ENCODE measurements at regions of chr17 and their contacts with region 1.

Region 1: DNA sequence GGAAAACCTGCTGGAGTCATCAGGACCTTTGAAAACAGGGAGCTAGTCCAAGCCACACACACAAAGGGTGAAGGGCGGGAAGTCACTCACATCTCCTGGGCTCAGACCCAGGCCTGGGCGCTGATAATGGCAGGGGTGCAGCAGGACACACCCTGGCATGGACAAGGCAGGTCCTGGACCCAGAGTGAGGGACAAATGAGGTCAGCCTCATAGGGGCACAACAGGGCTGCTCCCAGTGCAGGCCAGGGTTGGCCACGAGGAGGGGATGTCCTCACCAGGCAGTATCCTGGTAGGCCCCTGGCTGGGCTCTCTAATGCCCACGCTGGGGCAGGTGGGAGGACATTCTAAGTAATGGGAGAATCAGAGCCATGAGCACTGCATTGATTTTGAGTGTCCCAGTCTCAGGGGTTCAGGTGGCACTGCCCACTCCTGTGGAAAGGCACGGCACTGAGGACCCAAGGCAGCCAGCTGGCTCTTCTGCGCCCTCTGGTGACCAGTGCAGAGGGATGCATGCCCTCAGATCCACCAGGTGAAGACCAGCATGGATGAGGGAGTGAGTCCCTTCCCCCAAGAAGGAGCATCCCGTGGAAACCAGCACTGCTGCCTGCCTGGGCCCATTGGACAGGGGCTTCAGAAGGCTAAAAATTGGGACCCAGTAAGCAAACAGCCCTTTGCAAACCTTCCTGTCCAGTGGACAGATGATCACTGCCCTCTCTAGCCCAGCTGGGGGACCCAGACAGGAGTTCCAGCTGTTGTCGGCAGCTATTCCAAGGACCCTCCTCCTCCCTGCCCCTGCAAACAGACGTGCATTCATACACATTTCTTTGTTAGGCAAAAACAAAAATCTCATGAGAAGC is 23.4 kb upstream of the SREBF1 start:
- DNase-seq: peak; percentile 82
- ATAC-seq: peak; percentile 97
- H3K4me3 ChIP-seq: no peak overlapping the region
- H3K4me3 Mint-ChIP-seq: no peak overlapping the region
- H3K27ac ChIP-seq: no peak overlapping the region
- H3K27ac Mint-ChIP-seq: no peak overlapping the region
- H3K4me1 ChIP-seq: peaks cover 0 to 6% of the 10 kb centered on the region in 2 donors
- H3K4me1 Mint-ChIP-seq: no peaks in the 10 kb centered on the region
- H3K27me3 ChIP-seq: no peaks in the 10 kb centered on the region
- H3K27me3 Mint-ChIP-seq: no peaks in the 10 kb centered on the region
- CTCF ChIP-seq: peak; percentile 96

Region 2: DNA sequence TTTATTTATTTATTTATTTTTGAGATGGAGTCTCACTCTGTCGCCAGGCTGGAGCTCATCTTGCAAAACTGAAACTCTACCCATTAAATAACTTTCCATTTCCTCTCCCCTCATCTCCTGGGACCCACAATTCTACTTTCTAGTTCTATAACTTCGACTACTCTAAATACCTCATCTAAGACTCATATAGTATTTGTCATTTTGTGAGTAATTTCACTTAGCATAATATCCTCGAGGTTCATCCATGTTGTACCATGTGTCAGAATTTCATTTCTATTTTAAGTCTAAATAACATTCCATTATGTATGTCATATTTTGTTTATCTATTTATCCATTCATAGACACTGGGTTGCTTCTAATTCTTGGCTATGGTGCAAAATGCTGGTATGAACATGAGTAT is 562.0 kb before region 1 on chr17:
- CTCF ChIA-PET with region 1: no interaction called
- POLR2A ChIA-PET with region 1: no interaction called
- intact Hi-C with region 1: no loop called
- DNase-seq: no peak
- ATAC-seq: no peak
- H3K4me3 ChIP-seq: no peak overlapping the region
- H3K4me3 Mint-ChIP-seq: no peak overlapping the region
- H3K27ac ChIP-seq: no peak overlapping the region
- H3K27ac Mint-ChIP-seq: no peak overlapping the region
- H3K4me1 ChIP-seq: peaks cover 14 to 17% of the 10 kb centered on the region in 2 donors
- H3K4me1 Mint-ChIP-seq: peaks cover 20% of the 10 kb centered on the region
- H3K27me3 ChIP-seq: peaks cover 0 to 6% (median under 1%) of the 10 kb centered on the region in 4 experiments
- H3K27me3 Mint-ChIP-seq: no peaks in the 10 kb centered on the region
- CTCF ChIP-seq: no peak

Region 3: DNA sequence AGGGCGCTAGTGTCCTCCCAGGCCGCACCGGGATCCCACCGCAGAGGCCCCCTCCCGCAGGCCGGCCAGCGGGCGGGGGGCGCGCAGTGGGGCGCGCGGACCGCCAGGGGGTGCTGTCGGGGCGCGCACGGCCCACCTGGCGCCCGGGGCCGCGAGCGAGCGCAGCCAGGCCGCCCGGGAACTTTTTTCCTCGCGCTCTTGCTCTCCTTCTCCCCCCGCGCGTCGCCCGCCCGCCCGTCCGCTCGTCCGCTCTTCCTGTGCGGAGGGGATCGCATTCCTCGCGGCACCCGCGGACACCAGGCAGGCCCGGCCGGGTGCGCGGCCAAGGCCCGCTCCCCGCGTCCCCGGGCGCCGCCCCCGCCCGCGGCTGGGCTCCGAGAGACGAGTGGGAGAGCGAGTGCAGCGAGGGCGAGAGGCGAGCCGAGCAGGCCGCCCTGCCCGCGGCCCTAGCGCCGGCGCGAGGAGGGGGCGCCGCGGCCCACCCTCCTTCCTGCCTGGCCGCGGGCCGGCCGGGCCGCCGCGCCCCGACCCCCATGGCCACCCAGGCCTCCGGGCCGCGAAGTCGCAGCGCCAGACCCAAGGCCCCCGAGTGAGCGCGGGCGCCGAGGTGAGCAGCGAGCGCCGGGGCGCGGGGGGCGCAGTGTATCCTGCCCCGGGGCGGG is 178.8 kb before region 1 on chr17 and contains the start of gene RAI1:
- CTCF ChIA-PET with region 1: interaction called, 90 read pairs
- POLR2A ChIA-PET with region 1: interaction called, 5 read pairs
- intact Hi-C with region 1: loop called (anchors 1 kb)
- DNase-seq: peak; percentile 90
- ATAC-seq: peak; percentile 64
- H3K4me3 ChIP-seq: peak within 1 kb of the TSS in 4 of 5 experiments; percentile 66 to 86 (median 72)
- H3K4me3 Mint-ChIP-seq: peak within 1 kb of the TSS; percentile 91
- H3K27ac ChIP-seq: peak within 1 kb of the TSS; percentile 86 to 97
- H3K27ac Mint-ChIP-seq: peak within 1 kb of the TSS; percentile 88
- H3K4me1 ChIP-seq: peaks cover 7 to 19% of the 10 kb centered on the region in 2 donors
- H3K4me1 Mint-ChIP-seq: peaks cover 30% of the 10 kb centered on the region
- H3K27me3 ChIP-seq: peaks cover 0 to 3% (median 0%) of the 10 kb centered on the region in 4 experiments
- H3K27me3 Mint-ChIP-seq: peaks cover 5% of the 10 kb centered on the region
- CTCF ChIP-seq: peak; percentile 74
- total RNA-seq, gene RAI1: 33.6 and 34.0 TPM in 2 replicates

Region 4: GRCh38 chr17:17729620-17730249 is 130.4 kb before region 1 on chr17:
- CTCF ChIA-PET with region 1: interaction called, 3 read pairs
- POLR2A ChIA-PET with region 1: no interaction called
- intact Hi-C with region 1: loop called (anchors 1 kb)
- DNase-seq: peak; percentile 76
- ATAC-seq: peak; percentile 90
- H3K4me3 ChIP-seq: no peak overlapping the region
- H3K4me3 Mint-ChIP-seq: no peak overlapping the region
- H3K27ac ChIP-seq: no peak overlapping the region
- H3K27ac Mint-ChIP-seq: peak overlapping the region; percentile 12
- H3K4me1 ChIP-seq: peaks cover 9 to 20% of the 10 kb centered on the region in 2 donors
- H3K4me1 Mint-ChIP-seq: peaks cover 23% of the 10 kb centered on the region
- H3K27me3 ChIP-seq: no peaks in the 10 kb centered on the region
- H3K27me3 Mint-ChIP-seq: no peaks in the 10 kb centered on the region
- CTCF ChIP-seq: peak; percentile 81

Region 5: DNA sequence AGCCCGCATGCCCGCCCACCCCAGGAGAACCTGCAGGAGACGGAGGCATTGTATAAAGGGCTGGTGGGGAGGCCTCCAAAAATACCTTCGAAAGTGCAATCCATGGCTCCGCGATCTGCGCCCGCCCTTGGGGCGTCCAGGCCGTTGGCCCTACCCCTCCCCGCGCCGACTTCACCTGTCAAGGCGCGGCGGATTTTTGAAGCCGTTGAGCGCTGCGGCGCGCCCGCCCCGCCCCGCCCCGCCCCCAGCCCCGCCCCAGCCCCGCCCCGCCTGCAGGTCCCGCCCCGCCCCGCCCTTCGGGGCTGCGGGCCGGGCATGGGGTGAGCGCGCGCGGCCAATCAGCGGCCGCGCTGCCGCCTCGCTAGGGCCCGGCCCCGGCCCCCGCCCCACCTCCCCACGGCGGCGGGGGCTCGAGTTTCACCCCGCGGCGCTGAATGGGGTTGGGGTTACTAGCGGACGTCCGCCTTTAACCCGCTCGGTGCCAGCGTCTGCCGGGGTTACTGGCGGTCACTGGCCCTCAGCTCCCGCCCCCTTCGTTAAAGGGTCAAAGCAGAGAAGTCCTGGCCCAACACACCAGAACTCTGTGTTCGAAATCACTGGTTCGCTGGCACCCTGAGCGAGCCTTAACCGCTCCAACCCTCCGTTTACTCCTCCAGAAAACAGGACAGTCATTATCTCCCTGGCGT is 36.6 kb before region 1 on chr17:
- CTCF ChIA-PET with region 1: interaction called, 26 read pairs
- POLR2A ChIA-PET with region 1: no interaction called
- intact Hi-C with region 1: no loop called
- DNase-seq: peak; percentile 86
- ATAC-seq: peak; percentile 93
- H3K4me3 ChIP-seq: peak overlapping the region; percentile 35 to 82 (median 56)
- H3K4me3 Mint-ChIP-seq: peak overlapping the region; percentile 86
- H3K27ac ChIP-seq: peak overlapping the region; percentile 16 to 56
- H3K27ac Mint-ChIP-seq: peak overlapping the region; percentile 67
- H3K4me1 ChIP-seq: peaks cover 28 to 41% of the 10 kb centered on the region in 2 donors
- H3K4me1 Mint-ChIP-seq: peaks cover 52% of the 10 kb centered on the region
- H3K27me3 ChIP-seq: no peaks in the 10 kb centered on the region
- H3K27me3 Mint-ChIP-seq: no peaks in the 10 kb centered on the region
- CTCF ChIP-seq: no peak

Region 6: DNA sequence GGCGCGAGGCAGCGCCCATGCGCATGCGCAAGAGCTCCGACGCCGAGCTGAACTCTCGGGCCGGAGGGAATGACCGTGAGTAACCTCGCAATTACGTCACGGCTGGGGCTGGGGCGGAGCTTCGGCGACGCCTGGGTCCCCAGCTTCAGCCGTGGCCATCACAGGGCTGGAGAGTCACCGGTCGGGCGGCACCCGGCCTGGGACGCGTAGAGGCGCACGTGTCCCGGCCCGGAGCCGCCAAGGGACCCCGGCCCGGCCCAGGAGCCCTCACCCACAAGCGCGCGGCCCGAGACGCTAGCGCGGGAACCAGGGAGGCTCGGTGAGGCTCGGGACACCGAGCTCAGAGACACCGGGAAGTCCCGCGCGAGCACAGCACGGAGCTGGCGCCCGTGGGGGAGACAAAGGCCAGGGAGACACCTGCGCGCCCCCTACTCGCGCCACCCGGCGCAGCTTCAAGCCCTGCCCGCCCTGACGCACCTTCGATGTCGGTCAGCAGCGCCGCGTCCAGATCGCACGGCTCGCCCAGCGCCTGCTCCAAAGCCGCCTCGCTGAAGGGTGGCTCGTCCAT is 23.8 kb before region 1 on chr17:
- CTCF ChIA-PET with region 1: interaction called, 11 read pairs
- POLR2A ChIA-PET with region 1: no interaction called
- intact Hi-C with region 1: no loop called
- DNase-seq: peak; percentile 98
- ATAC-seq: peak; percentile 69
- H3K4me3 ChIP-seq: peak overlapping the region; percentile 23 to 91 (median 89)
- H3K4me3 Mint-ChIP-seq: peak overlapping the region; percentile 88
- H3K27ac ChIP-seq: peak overlapping the region; percentile 93 to 97
- H3K27ac Mint-ChIP-seq: peak overlapping the region; percentile 91
- H3K4me1 ChIP-seq: peaks cover 45 to 64% of the 10 kb centered on the region in 2 donors
- H3K4me1 Mint-ChIP-seq: peaks cover 61% of the 10 kb centered on the region
- H3K27me3 ChIP-seq: no peaks in the 10 kb centered on the region
- H3K27me3 Mint-ChIP-seq: no peaks in the 10 kb centered on the region
- CTCF ChIP-seq: no peak

Region 7: GRCh38 chr17:17919169-17920107 is 59.3 kb after region 1 on chr17:
- CTCF ChIA-PET with region 1: interaction called, 3 read pairs
- POLR2A ChIA-PET with region 1: interaction called, 3 read pairs
- intact Hi-C with region 1: loop called (anchors 2 kb)
- DNase-seq: peak; percentile 67
- ATAC-seq: peak; percentile 69
- H3K4me3 ChIP-seq: no peak overlapping the region
- H3K4me3 Mint-ChIP-seq: no peak overlapping the region
- H3K27ac ChIP-seq: no peak overlapping the region
- H3K27ac Mint-ChIP-seq: no peak overlapping the region
- H3K4me1 ChIP-seq: no peaks in the 10 kb centered on the region
- H3K4me1 Mint-ChIP-seq: no peaks in the 10 kb centered on the region
- H3K27me3 ChIP-seq: no peaks in the 10 kb centered on the region
- H3K27me3 Mint-ChIP-seq: no peaks in the 10 kb centered on the region
- CTCF ChIP-seq: peak; percentile 71

Region 8: DNA sequence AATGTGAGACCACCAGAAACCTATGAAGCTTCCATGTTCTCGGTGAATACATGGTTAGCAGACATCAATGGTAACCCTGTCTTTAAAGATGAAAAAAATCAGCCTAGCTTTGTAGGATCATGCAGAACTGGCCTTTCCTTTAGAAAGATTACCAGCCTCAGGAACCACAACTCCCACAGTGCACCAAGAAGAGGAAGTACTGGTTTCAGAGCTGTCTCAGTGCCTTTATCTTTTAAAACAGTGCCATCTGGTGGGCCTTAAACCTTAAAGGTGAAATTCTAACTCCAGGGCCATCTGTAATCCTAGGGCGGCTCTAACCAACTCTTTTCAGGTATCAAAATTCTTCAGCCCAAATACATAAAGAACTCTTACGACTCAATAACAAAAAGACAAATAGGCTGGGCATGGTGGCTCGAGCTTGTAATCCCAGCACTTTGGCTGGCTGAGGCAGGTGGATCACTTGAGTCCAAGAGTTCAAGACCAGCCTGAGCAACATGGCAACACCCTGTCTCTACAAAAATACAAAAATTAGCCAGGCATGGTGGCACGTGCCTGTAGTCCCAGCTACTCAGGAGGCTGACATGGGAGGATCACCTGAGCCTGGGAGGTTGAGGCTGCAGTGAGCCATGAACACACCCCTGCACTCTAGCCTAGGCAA is 173.4 kb after region 1 on chr17:
- CTCF ChIA-PET with region 1: interaction called, 5 read pairs
- POLR2A ChIA-PET with region 1: no interaction called
- intact Hi-C with region 1: loop called (anchors 1 kb)
- DNase-seq: peak; percentile 86
- ATAC-seq: peak; percentile 72
- H3K4me3 ChIP-seq: no peak overlapping the region
- H3K4me3 Mint-ChIP-seq: no peak overlapping the region
- H3K27ac ChIP-seq: no peak overlapping the region
- H3K27ac Mint-ChIP-seq: peak overlapping the region; percentile 82
- H3K4me1 ChIP-seq: peaks cover 16 to 39% of the 10 kb centered on the region in 2 donors
- H3K4me1 Mint-ChIP-seq: peaks cover 54% of the 10 kb centered on the region
- H3K27me3 ChIP-seq: no peaks in the 10 kb centered on the region
- H3K27me3 Mint-ChIP-seq: no peaks in the 10 kb centered on the region
- CTCF ChIP-seq: peak; percentile 73